ENCODE measurements at regions of chr2 and their contacts with region 1.

Region 1: DNA sequence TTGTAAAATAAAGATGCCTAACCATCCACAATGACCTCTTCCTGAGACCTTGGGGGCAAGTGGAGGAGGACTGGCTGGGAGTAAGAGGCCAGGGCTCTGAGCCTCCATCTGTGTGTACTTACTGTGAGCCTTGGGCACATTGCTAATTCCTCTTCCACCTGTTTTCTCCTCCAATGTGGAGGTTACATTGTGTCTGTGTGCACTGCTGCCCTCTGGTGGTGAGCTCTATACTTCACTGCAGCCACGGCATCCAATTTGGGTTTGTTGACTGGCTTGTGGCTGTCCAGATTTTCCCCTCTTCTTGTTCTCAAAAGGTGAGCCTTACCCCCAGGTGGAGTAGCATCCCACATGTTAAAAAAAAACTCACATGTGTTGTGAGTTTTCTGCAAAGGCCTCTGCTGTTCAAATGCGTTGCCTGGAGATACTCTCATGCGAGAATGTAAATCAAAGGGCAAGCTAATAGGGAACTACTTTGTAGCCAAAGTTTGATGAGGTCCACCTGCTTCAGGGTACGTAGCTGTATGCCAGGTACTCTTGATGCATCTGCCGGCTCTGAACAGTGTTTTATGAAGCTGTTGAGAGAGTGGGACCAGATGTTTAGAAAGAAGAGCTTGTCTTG is 80.8 kb downstream of the APOB start:
- DNase-seq: peak; percentile 81
- H3K4me3 Mint-ChIP-seq: no peak overlapping the region
- H3K27ac Mint-ChIP-seq: no peak overlapping the region
- H3K4me1 Mint-ChIP-seq: no peaks in the 10 kb centered on the region
- H3K27me3 Mint-ChIP-seq: peaks cover 9% of the 10 kb centered on the region

Region 2: DNA sequence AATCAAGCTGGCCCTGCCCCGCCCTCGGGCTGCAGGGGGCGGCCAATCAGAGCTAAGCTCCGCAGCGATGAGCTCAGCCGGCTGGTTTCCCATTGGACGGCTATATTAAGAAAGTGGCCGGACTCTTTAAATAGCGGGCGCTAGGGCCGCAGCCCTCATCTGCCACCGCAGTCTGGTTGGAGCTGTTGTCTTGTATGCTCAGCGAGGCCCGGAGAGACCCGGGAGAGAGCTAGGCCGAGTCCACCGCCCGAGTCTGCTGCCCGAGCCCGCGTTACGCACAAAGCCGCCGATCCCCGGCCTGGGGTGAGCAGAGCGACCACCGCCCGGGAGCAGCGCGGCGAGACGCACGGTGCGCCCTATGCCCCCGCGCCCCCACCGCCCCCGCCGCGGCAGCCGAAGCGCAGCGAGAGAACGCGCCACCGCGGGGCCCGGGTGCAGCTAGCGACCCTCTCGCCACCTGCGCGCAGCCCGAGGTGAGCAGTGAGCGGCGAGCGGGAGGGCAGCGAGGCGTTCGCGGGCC is 516.1 kb before region 1 on chr2 and contains the start of gene RHOB:
- CTCF ChIA-PET with region 1: no interaction called
- intact Hi-C with region 1: loop called (anchors 5 kb)
- DNase-seq: peak; percentile 91
- H3K4me3 Mint-ChIP-seq: peak within 1 kb of the TSS; percentile 76
- H3K27ac Mint-ChIP-seq: no peak within 1 kb of the TSS
- H3K4me1 Mint-ChIP-seq: peaks cover 11% of the 10 kb centered on the region
- H3K27me3 Mint-ChIP-seq: peaks cover 3% of the 10 kb centered on the region
- total RNA-seq, gene RHOB: 1.8 to 2.0 TPM

Region 3: DNA sequence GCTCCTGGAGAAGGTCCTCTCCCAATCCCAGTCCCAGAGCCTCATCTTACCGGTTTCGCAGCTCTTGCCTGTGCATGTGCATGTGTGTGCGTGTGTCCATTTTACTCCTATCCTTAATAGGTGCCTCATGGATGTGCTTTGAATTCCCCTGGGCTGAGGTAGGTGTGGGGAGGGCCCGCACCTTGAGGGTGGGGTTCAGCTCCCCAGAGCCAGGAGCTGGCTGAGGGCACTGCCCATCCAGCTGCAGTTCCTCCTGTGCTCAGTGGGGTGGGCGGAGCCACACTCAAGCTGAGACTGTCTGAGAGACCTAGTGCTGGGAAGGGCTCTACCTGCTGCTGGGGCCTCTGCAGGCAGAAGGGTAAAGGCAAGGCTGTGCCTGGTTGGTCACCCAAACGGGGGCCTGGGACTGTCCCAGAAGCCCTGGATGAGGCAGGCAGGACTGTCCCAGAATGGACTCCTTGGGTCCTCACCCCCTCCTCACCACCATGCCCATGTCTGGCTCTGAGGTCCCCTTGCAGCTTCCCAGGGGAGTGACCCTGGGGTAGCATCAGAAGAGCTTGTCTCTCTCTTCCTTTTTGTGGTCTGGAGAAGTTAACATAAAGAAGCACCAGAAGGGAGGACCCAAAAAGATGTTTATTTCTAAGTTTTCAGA is 287.2 kb before region 1 on chr2:
- CTCF ChIA-PET with region 1: interaction called, 10 read pairs
- intact Hi-C with region 1: no loop called
- DNase-seq: peak; percentile 19
- H3K4me3 Mint-ChIP-seq: no peak overlapping the region
- H3K27ac Mint-ChIP-seq: no peak overlapping the region
- H3K4me1 Mint-ChIP-seq: no peaks in the 10 kb centered on the region
- H3K27me3 Mint-ChIP-seq: peaks cover 5% of the 10 kb centered on the region

Region 4: GRCh38 chr2:20781656-20782265 is 181.3 kb before region 1 on chr2:
- CTCF ChIA-PET with region 1: interaction called, 49 read pairs
- intact Hi-C with region 1: loop called (anchors 1 kb)
- DNase-seq: peak; percentile 23
- H3K4me3 Mint-ChIP-seq: no peak overlapping the region
- H3K27ac Mint-ChIP-seq: no peak overlapping the region
- H3K4me1 Mint-ChIP-seq: no peaks in the 10 kb centered on the region
- H3K27me3 Mint-ChIP-seq: no peaks in the 10 kb centered on the region